ENCODE measurements at regions of chr18 and their contacts with region 1.

Region 1: GRCh38 chr18:80145196-80145804 is 36.2 kb downstream of the ADNP2 start:
- DNase-seq: no peak
- H3K4me3 ChIP-seq: no peak overlapping the region
- H3K27ac ChIP-seq: no peak overlapping the region
- H3K4me1 ChIP-seq: no peaks in the 10 kb centered on the region
- H3K27me3 ChIP-seq: no peaks in the 10 kb centered on the region
- CTCF ChIP-seq: no peak

Region 2: GRCh38 chr18:80127635-80128034 is 17.7 kb before region 1 on chr18:
- CTCF ChIA-PET with region 1: no interaction called
- POLR2A ChIA-PET with region 1: no interaction called
- intact Hi-C with region 1: loop called (anchors 1 kb)
- DNase-seq: no peak
- H3K4me3 ChIP-seq: no peak overlapping the region
- H3K27ac ChIP-seq: no peak overlapping the region
- H3K4me1 ChIP-seq: no peaks in the 10 kb centered on the region
- H3K27me3 ChIP-seq: no peaks in the 10 kb centered on the region
- CTCF ChIP-seq: no peak